ENCODE measurements at regions of chr10 and their contacts with region 1.

Region 1: GRCh38 chr10:92290837-92291615 is at the starts of genes CPEB3 and MARCHF5:
- DNase-seq: peak; percentile 98
- H3K4me3 ChIP-seq: peak within 1 kb of the TSS; percentile 85 to 96 (median 94)
- H3K27ac ChIP-seq: peak within 1 kb of the TSS; percentile 76
- H3K4me1 ChIP-seq: peaks cover 6% of the 10 kb centered on the region
- H3K27me3 ChIP-seq: no peaks in the 10 kb centered on the region
- CTCF ChIP-seq: peak; percentile 49 to 81
- total RNA-seq, gene CPEB3: 1.2 to 1.5 TPM
- total RNA-seq, gene MARCHF5: 16.5 to 53.0 TPM

Region 2: GRCh38 chr10:92087750-92088395 is 203.2 kb before region 1 on chr10:
- CTCF ChIA-PET with region 1: interaction called, 9 read pairs
- dilution Hi-C with region 1: no loop called
- in situ Hi-C with region 1: loop called (anchors 5 to 25 kb)
- intact Hi-C with region 1: loop called (anchors 1 kb)
- DNase-seq: peak; percentile 75
- H3K4me3 ChIP-seq: no peak overlapping the region
- H3K27ac ChIP-seq: no peak overlapping the region
- H3K4me1 ChIP-seq: no peaks in the 10 kb centered on the region
- H3K27me3 ChIP-seq: no peaks in the 10 kb centered on the region
- CTCF ChIP-seq: peak; percentile 89 to 92

Region 3: DNA sequence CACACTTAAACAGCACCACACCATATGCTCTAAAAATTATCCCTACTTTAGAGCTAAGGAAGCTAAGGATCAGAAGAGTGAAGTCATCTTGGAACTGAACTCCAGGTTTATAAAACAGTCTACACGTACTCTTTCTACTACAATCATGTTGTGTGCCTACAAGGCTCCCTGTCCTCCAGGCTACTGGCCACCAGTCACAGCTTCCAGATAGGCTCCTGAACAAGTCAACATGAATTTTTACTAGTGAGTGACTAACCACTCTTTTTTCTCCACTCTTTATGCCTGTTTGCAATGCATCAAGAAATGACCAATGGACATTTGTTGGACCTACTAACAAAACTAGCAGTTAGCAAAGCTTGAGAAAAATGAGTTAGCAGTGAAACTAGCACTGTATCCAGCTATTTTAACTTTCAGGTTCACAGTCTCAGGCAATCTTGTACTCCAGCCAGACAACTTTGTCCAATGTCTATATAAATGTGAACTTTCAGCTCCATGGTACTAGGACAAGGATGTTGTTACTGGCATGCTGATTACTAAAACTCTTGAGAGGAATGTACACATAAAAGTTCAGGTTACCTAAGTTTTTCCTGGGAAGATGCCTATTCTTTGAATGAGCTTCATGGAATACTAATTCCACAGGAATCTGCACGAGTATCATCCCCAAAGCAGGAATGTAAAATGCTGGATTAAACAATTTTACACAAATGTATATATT is 187.5 kb before region 1 on chr10:
- CTCF ChIA-PET with region 1: no interaction called
- dilution Hi-C with region 1: no loop called
- in situ Hi-C with region 1: loop called in 1 of 2 experiments (anchors 25 kb)
- intact Hi-C with region 1: loop called (anchors 5 kb)
- DNase-seq: no peak
- H3K4me3 ChIP-seq: no peak overlapping the region
- H3K27ac ChIP-seq: no peak overlapping the region
- H3K4me1 ChIP-seq: peaks cover 10% of the 10 kb centered on the region
- H3K27me3 ChIP-seq: no peaks in the 10 kb centered on the region
- CTCF ChIP-seq: no peak

Region 4: DNA sequence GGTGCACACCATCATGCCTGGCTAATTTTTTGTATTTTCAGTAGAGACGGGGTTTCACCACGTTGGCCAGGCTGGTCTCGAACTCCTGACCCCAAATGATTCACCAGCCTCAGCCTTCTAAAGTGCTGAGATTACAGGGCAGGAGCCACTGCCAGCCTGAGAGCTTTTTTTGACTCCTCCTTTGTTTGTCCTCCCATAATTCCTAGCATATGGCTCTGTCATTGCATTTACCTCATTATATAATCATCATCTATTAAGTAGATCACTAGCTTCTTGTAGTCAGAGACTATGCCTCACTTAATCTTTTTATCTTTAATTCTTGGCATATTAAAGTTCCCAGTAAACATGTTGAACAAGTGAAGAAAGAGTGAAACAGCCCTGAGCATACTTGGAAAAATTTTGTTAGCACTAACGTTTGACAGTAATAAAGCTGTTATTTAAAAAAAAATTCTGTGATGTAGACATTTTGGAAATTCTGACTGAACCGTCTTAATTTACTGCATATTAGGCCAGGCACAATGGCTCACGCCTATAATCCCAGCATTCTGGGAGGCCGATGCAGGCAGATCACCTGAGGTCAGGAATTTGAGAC is 82.2 kb before region 1 on chr10:
- CTCF ChIA-PET with region 1: interaction called, 4 read pairs
- dilution Hi-C with region 1: no loop called
- in situ Hi-C with region 1: no loop called
- intact Hi-C with region 1: loop called (anchors 2 kb)
- DNase-seq: peak; percentile 61
- H3K4me3 ChIP-seq: no peak overlapping the region
- H3K27ac ChIP-seq: no peak overlapping the region
- H3K4me1 ChIP-seq: peaks cover 3% of the 10 kb centered on the region
- H3K27me3 ChIP-seq: no peaks in the 10 kb centered on the region
- CTCF ChIP-seq: no peak

Region 5: GRCh38 chr10:92327445-92328433 is 36.7 kb after region 1 on chr10:
- CTCF ChIA-PET with region 1: interaction called, 4 read pairs
- dilution Hi-C with region 1: no loop called
- in situ Hi-C with region 1: no loop called
- intact Hi-C with region 1: loop called (anchors 2 kb)
- DNase-seq: peak; percentile 12
- H3K4me3 ChIP-seq: no peak overlapping the region
- H3K27ac ChIP-seq: peak overlapping the region; percentile 42
- H3K4me1 ChIP-seq: peaks cover 36% of the 10 kb centered on the region
- H3K27me3 ChIP-seq: no peaks in the 10 kb centered on the region
- CTCF ChIP-seq: no peak

Region 6: GRCh38 chr10:92432596-92432995 is 141.6 kb after region 1 on chr10:
- CTCF ChIA-PET with region 1: interaction called, 3 read pairs
- dilution Hi-C with region 1: no loop called
- in situ Hi-C with region 1: loop called in 1 of 2 experiments (anchors 10 kb)
- intact Hi-C with region 1: loop called (anchors 1 kb)
- DNase-seq: no peak
- H3K4me3 ChIP-seq: no peak overlapping the region
- H3K27ac ChIP-seq: no peak overlapping the region
- H3K4me1 ChIP-seq: no peaks in the 10 kb centered on the region
- H3K27me3 ChIP-seq: no peaks in the 10 kb centered on the region
- CTCF ChIP-seq: no peak

Region 7: GRCh38 chr10:92562424-92562823 is 271.4 kb after region 1 on chr10:
- CTCF ChIA-PET with region 1: no interaction called
- dilution Hi-C with region 1: no loop called
- in situ Hi-C with region 1: no loop called
- intact Hi-C with region 1: no loop called
- DNase-seq: no peak
- H3K4me3 ChIP-seq: no peak overlapping the region
- H3K27ac ChIP-seq: no peak overlapping the region
- H3K4me1 ChIP-seq: peaks cover 2% of the 10 kb centered on the region
- H3K27me3 ChIP-seq: no peaks in the 10 kb centered on the region
- CTCF ChIP-seq: no peak

Region 8: DNA sequence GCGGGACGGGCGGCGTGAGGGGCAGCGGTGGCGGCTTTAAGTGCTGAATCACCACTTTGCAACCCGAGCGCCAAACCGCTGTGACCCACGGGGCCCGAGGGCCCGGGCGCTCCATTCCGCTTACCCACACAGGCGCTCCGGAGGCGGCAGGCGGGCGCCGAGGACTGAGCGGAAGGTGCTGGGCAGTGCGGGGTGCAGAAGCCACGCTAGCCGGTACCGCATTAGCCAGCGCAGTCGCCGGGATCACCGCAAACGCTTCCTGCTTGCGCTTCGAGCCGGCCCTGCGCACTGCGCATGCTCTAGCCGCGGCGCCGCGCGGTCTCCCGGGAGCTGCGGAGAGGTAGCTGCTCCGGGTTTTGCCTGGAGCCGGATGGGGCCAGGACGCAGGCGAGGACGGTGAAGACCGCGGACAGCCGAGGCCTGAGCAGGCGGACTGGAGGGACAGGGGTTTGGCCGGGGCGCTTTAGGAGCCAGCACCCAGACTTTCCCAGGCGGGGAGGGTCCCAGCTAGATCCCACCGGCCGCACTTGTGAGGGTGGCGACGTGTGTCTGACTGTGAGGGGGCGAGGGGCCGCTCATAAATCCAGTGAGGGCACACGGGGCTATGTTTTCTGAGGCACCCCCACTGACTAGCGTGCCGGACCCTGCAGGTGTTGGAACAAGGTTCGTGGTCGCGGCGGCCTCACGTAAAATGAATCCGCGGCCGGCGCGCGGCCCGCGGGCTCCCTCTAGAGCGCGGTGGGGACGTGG is 282.9 kb after region 1 on chr10 and contains the start of gene IDE:
- CTCF ChIA-PET with region 1: no interaction called
- dilution Hi-C with region 1: no loop called
- in situ Hi-C with region 1: no loop called
- intact Hi-C with region 1: loop called (anchors 10 kb)
- DNase-seq: peak; percentile 87
- H3K4me3 ChIP-seq: peak within 1 kb of the TSS; percentile 78 to 97 (median 92)
- H3K27ac ChIP-seq: peak within 1 kb of the TSS; percentile 77
- H3K4me1 ChIP-seq: peaks cover 28% of the 10 kb centered on the region
- H3K27me3 ChIP-seq: no peaks in the 10 kb centered on the region
- CTCF ChIP-seq: peak; percentile 44 to 94
- total RNA-seq, gene IDE: 27.8 to 37.8 TPM

Measured in mammary epithelial cell (primary cell).